Activated CD8-positive, alpha-beta T cell treated with anti-CD3 and anti-CD28 coated beads for 36 hours (primary cell): ENCODE measurements at regions of chr2 and their contacts with region 1.

Region 1: DNA sequence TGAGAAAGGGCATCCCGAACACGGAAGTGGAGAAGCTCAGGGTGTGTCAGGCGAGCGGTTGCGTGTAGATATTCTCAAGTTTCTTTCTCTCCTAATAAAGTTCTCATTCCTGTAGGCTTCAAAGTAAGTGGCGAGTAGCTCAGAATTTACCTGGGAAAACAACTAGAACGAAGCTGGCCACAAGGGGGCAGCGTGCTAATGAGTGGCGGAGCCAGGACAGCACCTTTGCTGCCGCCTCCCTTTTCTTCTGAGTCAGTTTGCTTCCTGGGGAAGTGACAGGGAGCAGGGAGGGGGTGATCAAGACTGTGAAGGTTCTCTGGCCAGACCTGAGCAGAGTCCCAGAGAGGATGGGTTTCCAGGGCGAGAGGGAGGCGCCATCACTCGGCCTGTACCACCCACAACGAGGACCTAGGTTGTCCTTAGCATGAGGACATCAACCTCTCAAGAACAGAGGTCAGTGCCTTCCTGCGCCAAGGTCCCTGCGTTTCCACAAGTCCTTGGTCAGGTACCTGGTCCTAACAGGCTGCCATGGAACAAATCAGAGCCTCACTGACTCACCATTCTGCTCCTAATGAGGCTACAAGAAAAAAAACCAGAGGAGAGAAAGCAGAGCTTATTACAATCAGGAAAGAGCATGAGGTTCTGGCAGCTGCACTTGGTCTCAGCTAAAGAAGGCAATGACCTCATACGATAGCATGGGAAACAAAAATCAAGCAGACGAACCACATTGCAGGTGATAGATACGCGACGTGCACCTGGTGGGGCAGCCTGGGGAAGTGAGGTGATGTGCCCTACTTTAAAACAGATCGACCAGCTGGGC is 98.6 kb downstream of the PLB1 start:
- DNase-seq: peak; percentile 93
- ATAC-seq: peak; percentile 88
- H3K4me3 Mint-ChIP-seq: peak overlapping the region; percentile 39
- H3K27ac Mint-ChIP-seq: peak overlapping the region; percentile 76
- H3K4me1 Mint-ChIP-seq: peaks cover 13% of the 10 kb centered on the region
- H3K27me3 Mint-ChIP-seq: no peaks in the 10 kb centered on the region
- CTCF ChIP-seq: peak; percentile 90

Region 2: GRCh38 chr2:28583899-28584553 is 10.5 kb before region 1 on chr2:
- CTCF ChIA-PET with region 1: interaction called, 34 read pairs
- POLR2A ChIA-PET with region 1: interaction called, 6 read pairs
- intact Hi-C with region 1: no loop called
- DNase-seq: peak; percentile 88
- ATAC-seq: peak; percentile 93
- H3K4me3 Mint-ChIP-seq: no peak overlapping the region
- H3K27ac Mint-ChIP-seq: peak overlapping the region; percentile 57
- H3K4me1 Mint-ChIP-seq: peaks cover 46% of the 10 kb centered on the region
- H3K27me3 Mint-ChIP-seq: no peaks in the 10 kb centered on the region
- CTCF ChIP-seq: no peak

Region 3: GRCh38 chr2:28621172-28622100 is 26.9 kb after region 1 on chr2:
- CTCF ChIA-PET with region 1: interaction called, 122 read pairs
- POLR2A ChIA-PET with region 1: no interaction called
- intact Hi-C with region 1: no loop called
- DNase-seq: peak; percentile 79
- ATAC-seq: peak; percentile 43
- H3K4me3 Mint-ChIP-seq: peak overlapping the region; percentile 41
- H3K27ac Mint-ChIP-seq: peak overlapping the region; percentile 94
- H3K4me1 Mint-ChIP-seq: peaks cover 94% of the 10 kb centered on the region
- H3K27me3 Mint-ChIP-seq: no peaks in the 10 kb centered on the region
- CTCF ChIP-seq: no peak

Region 4: DNA sequence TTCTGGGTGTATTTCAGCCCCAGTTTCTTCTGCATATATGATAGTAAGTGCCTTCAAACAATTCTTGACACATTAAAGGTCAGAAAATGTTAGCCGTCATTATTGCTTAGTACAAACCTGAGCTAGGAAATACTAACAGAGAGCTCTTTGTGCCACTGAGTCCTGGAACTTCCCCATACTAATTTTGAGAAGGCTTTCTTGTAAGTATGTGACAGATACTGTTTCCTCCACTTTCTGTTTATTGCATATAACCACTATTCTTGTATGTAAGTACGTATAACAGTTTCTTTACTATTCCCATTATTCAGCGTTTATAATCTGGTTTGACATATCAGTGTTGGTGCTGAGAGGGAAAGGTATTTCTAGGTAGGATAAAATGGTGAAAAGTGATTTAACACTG is 166.9 kb after region 1 on chr2:
- CTCF ChIA-PET with region 1: interaction called, 156 read pairs
- POLR2A ChIA-PET with region 1: interaction called, 8 read pairs
- intact Hi-C with region 1: no loop called
- DNase-seq: no peak
- ATAC-seq: no peak
- H3K4me3 Mint-ChIP-seq: no peak overlapping the region
- H3K27ac Mint-ChIP-seq: peak overlapping the region; percentile 46
- H3K4me1 Mint-ChIP-seq: peaks cover 75% of the 10 kb centered on the region
- H3K27me3 Mint-ChIP-seq: no peaks in the 10 kb centered on the region
- CTCF ChIP-seq: no peak

Region 5: GRCh38 chr2:28780496-28780895 is 186.0 kb after region 1 on chr2:
- CTCF ChIA-PET with region 1: interaction called, 15 read pairs
- POLR2A ChIA-PET with region 1: no interaction called
- intact Hi-C with region 1: no loop called
- DNase-seq: no peak
- ATAC-seq: no peak
- H3K4me3 Mint-ChIP-seq: no peak overlapping the region
- H3K27ac Mint-ChIP-seq: no peak overlapping the region
- H3K4me1 Mint-ChIP-seq: peaks cover 13% of the 10 kb centered on the region
- H3K27me3 Mint-ChIP-seq: no peaks in the 10 kb centered on the region
- CTCF ChIP-seq: no peak

Region 6: GRCh38 chr2:28810384-28811285 is 216.1 kb after region 1 on chr2 and contains the start of gene SPDYA:
- CTCF ChIA-PET with region 1: interaction called, 15 read pairs
- POLR2A ChIA-PET with region 1: no interaction called
- intact Hi-C with region 1: no loop called
- DNase-seq: peak; percentile 83
- ATAC-seq: peak; percentile 96
- H3K4me3 Mint-ChIP-seq: peak within 1 kb of the TSS; percentile 67
- H3K27ac Mint-ChIP-seq: peak within 1 kb of the TSS; percentile 25
- H3K4me1 Mint-ChIP-seq: peaks cover 10% of the 10 kb centered on the region
- H3K27me3 Mint-ChIP-seq: peaks cover 1% of the 10 kb centered on the region
- CTCF ChIP-seq: no peak
- total RNA-seq, gene SPDYA: 1.3 to 1.4 TPM